Activated CD8-positive, alpha-beta T cell treated with anti-CD3 and anti-CD28 coated beads for 36 hours (primary cell): ENCODE measurements at regions of chr3 and their contacts with region 1.

Region 1: GRCh38 chr3:138329127-138329983 is at the start of gene NME9:
- DNase-seq: peak; percentile 94
- ATAC-seq: peak; percentile 94
- H3K4me3 Mint-ChIP-seq: peak within 1 kb of the TSS; percentile 84
- H3K27ac Mint-ChIP-seq: peak within 1 kb of the TSS; percentile 82
- H3K4me1 Mint-ChIP-seq: peaks cover 33% of the 10 kb centered on the region
- H3K27me3 Mint-ChIP-seq: no peaks in the 10 kb centered on the region
- CTCF ChIP-seq: peak; percentile 57
- total RNA-seq, gene NME9: 0.45 TPM in 1 of 2 experiments, not detected in the other

Region 2: DNA sequence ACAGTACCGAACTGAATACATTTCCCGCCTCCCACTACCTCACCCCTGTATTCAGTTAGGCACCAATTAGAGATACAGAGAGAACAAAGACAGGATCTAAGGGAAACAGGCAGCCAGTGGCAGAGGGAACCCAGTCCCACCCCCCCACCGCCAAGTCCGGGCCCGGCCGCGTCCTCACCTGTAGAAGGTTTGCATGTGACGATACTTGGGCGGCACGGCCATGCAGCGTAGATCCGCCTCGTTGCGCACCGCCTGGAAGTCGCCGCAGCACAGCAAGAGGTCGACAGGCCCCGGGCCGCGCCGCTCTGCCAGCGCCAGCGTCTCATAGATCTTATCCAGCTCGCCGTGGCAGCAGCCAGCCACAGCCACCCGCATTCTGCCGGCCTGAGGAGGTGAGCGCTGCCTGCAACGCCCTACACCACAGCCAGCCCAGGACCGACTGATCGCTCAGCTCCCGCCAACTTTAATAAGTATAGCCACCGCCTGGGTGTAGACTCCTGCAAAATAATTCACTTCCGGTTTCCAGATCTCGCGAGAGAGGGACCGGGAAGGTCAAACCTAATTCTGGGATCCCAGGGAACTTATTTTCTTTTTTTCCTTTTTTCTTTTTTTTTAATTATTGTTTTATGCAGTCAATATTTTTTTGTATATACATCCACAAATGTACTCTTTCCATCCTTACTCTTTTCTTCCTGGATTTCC is 154.8 kb before region 1 on chr3 and contains the start of gene DBR1:
- CTCF ChIA-PET with region 1: interaction called, 3 read pairs
- POLR2A ChIA-PET with region 1: no interaction called
- intact Hi-C with region 1: loop called (anchors 5 kb)
- DNase-seq: peak; percentile 84
- ATAC-seq: peak; percentile 90
- H3K4me3 Mint-ChIP-seq: peak within 1 kb of the TSS; percentile 98
- H3K27ac Mint-ChIP-seq: peak within 1 kb of the TSS; percentile 98
- H3K4me1 Mint-ChIP-seq: peaks cover 29% of the 10 kb centered on the region
- H3K27me3 Mint-ChIP-seq: no peaks in the 10 kb centered on the region
- CTCF ChIP-seq: no peak
- total RNA-seq, gene DBR1: 21.2 to 22.7 TPM

Region 3: GRCh38 chr3:138186803-138187295 is 142.5 kb before region 1 on chr3:
- CTCF ChIA-PET with region 1: interaction called, 7 read pairs
- POLR2A ChIA-PET with region 1: interaction called, 6 read pairs
- intact Hi-C with region 1: loop called (anchors 5 kb)
- DNase-seq: peak; percentile 93
- ATAC-seq: peak; percentile 96
- H3K4me3 Mint-ChIP-seq: peak overlapping the region; percentile 86
- H3K27ac Mint-ChIP-seq: peak overlapping the region; percentile 98
- H3K4me1 Mint-ChIP-seq: peaks cover 31% of the 10 kb centered on the region
- H3K27me3 Mint-ChIP-seq: peaks cover 3% of the 10 kb centered on the region
- CTCF ChIP-seq: no peak

Region 4: GRCh38 chr3:138348754-138349739 is 19.7 kb after region 1 on chr3:
- CTCF ChIA-PET with region 1: interaction called, 16 read pairs
- POLR2A ChIA-PET with region 1: interaction called, 3 read pairs
- intact Hi-C with region 1: no loop called
- DNase-seq: no peak
- ATAC-seq: no peak
- H3K4me3 Mint-ChIP-seq: peak overlapping the region; percentile 50
- H3K27ac Mint-ChIP-seq: no peak overlapping the region
- H3K4me1 Mint-ChIP-seq: peaks cover 4% of the 10 kb centered on the region
- H3K27me3 Mint-ChIP-seq: peaks cover 41% of the 10 kb centered on the region
- CTCF ChIP-seq: no peak